ENCODE measurements at regions of chr15 and their contacts with region 1.

Region 1: GRCh38 chr15:101258238-101259144 is 6.6 kb upstream of the CHSY1 start:
- DNase-seq: peak; percentile 61 to 65
- H3K4me3 ChIP-seq: no peak overlapping the region
- H3K27ac ChIP-seq: no peak overlapping the region
- H3K4me1 ChIP-seq: no peaks in the 10 kb centered on the region
- H3K27me3 ChIP-seq: no peaks in the 10 kb centered on the region
- CTCF ChIP-seq: peak; percentile 68 to 94 (median 84)
- POLR2A ChIP-seq: no peak

Region 2: DNA sequence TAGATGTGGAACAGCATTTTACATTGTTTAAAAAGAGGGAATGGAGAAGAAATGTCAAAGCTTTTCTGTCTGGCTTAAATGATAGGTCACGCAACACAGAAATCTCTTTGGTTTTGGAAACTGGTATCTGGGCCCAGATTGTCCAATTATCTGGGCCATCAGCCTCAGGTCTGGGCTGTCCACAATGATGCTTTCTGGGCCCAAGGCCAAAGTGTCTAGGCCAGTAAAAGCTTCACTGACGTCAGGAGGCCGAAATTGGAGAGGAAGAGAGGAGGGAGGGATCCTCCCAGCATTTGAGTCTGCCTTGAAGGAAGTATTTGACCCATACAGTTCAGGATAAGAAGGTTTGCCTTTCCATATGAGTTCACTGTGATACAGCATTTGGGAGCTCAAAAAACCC is 439.6 kb before region 1 on chr15:
- intact Hi-C with region 1: no loop called
- DNase-seq: no peak
- H3K4me3 ChIP-seq: no peak overlapping the region
- H3K27ac ChIP-seq: no peak overlapping the region
- H3K4me1 ChIP-seq: no peaks in the 10 kb centered on the region
- H3K27me3 ChIP-seq: no peaks in the 10 kb centered on the region
- CTCF ChIP-seq: no peak
- POLR2A ChIP-seq: no peak

Region 3: DNA sequence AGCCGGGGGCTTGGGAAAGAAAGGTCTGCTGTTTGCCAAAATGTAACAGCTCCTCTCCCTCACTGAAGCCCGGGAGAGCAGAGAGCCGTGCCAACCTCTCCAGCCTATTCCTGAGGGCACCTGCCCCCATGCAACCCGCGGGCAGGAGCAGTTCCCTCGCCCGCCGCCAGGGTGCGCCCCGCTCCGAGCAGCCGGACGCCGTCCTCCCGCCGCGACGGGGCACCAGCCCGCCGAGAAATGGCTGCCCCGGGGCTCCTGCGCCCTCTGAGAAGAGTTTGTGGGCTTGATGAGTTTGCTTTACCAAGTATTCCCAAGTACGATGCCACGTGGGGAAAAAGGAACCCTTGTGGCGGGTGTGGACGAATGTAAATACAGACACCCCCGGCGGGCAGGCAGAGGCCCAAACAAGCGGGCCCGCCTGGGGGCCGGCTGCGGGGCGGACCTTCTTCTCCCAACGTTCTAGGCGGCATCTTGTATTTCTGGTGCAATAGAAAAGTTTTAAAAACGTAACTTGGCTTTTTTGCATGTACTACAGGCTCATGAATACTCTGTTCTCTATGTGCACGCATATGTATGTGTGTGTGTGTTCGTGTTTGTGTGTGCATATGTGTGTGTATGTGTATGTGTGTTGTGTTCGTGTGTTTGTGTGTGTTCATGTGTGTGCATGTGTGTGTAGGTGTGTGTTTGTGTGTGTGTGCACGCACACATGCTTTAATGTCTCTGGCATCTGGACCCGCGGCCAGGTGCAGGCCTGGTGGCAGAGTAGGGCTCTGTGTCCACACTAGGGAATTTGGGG is 169.5 kb before region 1 on chr15:
- intact Hi-C with region 1: loop called (anchors 2 kb)
- DNase-seq: peak; percentile 85
- H3K4me3 ChIP-seq: no peak overlapping the region
- H3K27ac ChIP-seq: no peak overlapping the region
- H3K4me1 ChIP-seq: peaks cover 6 to 37% of the 10 kb centered on the region in 2 donors
- H3K27me3 ChIP-seq: no peaks in the 10 kb centered on the region
- CTCF ChIP-seq: peak; percentile 90 to 100 (median 100)
- POLR2A ChIP-seq: no peak

Region 4: GRCh38 chr15:101156509-101157159 is 101.9 kb before region 1 on chr15:
- intact Hi-C with region 1: no loop called
- DNase-seq: no peak
- H3K4me3 ChIP-seq: no peak overlapping the region
- H3K27ac ChIP-seq: no peak overlapping the region
- H3K4me1 ChIP-seq: no peaks in the 10 kb centered on the region
- H3K27me3 ChIP-seq: no peaks in the 10 kb centered on the region
- CTCF ChIP-seq: no peak
- POLR2A ChIP-seq: no peak

Measured in thyroid gland (tissue), 4 donors.